ENCODE measurements at regions of chr3 and their contacts with region 1.

Region 1: GRCh38 chr3:184135149-184135910 is at the start of gene EIF2B5:
- DNase-seq: peak; percentile 75 to 89 (median 85)
- H3K4me3 ChIP-seq: peak within 1 kb of the TSS; percentile 93
- H3K4me3 Mint-ChIP-seq: peak within 1 kb of the TSS; percentile 93 to 99 (median 98)
- H3K27ac ChIP-seq: peak within 1 kb of the TSS; percentile 85
- H3K27ac Mint-ChIP-seq: peak within 1 kb of the TSS; percentile 91 to 98 (median 96)
- H3K4me1 ChIP-seq: peaks cover 22% of the 10 kb centered on the region
- H3K4me1 Mint-ChIP-seq: peaks cover 38 to 46% (median 38%) of the 10 kb centered on the region in 3 donors
- H3K27me3 ChIP-seq: no peaks in the 10 kb centered on the region
- H3K27me3 Mint-ChIP-seq: no peaks in the 10 kb centered on the region
- total RNA-seq, gene EIF2B5: 74.8 to 83.9 TPM

Region 2: DNA sequence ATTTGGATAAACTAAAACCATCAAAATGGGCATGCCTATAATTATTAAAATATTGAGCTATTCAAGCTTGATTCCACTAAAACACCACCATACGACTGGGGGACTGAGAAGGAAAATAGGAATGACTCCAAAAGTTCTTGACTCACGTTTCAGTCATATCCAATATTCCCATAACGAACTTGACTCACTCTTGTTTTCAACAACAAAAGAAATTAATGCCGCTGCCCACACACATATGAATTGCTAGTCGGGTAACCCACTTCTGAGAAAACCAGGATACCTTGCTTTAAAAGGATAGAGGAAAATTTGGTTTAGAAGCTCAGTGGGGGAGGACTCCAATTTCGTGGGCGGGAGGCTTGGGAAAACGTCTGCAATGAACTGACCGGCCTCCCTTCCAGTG is 77.3 kb before region 1 on chr3:
- CTCF ChIA-PET with region 1: no interaction called
- POLR2A ChIA-PET with region 1: no interaction called
- DNase-seq: no peak
- H3K4me3 ChIP-seq: no peak overlapping the region
- H3K4me3 Mint-ChIP-seq: no peak overlapping the region
- H3K27ac ChIP-seq: no peak overlapping the region
- H3K27ac Mint-ChIP-seq: no peak overlapping the region
- H3K4me1 ChIP-seq: no peaks in the 10 kb centered on the region
- H3K4me1 Mint-ChIP-seq: no peaks in the 10 kb centered on the region
- H3K27me3 ChIP-seq: no peaks in the 10 kb centered on the region
- H3K27me3 Mint-ChIP-seq: peaks cover 2 to 17% of the 10 kb centered on the region in 2 donors

Region 3: DNA sequence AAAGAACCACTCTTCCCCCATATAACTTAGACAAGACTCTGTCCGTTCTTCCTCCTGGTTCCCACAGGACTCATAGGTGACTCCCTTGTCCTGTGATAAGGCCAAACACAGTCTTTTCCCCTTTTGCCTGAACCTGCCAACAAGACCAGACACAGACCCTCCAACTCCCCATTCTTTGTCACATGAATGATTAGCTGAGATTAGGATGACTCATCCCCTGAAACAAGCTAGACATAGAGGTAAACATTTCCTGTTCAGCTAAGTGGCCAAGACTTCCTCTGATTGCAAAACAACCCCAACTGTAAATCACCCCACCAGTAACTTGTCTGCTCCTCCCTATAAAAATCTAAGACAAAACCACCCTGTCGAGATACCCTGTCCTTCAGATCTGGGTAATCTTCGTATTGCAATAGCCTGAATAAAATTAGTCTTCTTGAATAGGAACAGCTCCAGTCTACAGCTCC is 49.9 kb before region 1 on chr3:
- CTCF ChIA-PET with region 1: no interaction called
- POLR2A ChIA-PET with region 1: no interaction called
- DNase-seq: no peak
- H3K4me3 ChIP-seq: no peak overlapping the region
- H3K4me3 Mint-ChIP-seq: no peak overlapping the region
- H3K27ac ChIP-seq: no peak overlapping the region
- H3K27ac Mint-ChIP-seq: peak overlapping the region in 2 of 8 donors; percentile 5 to 74
- H3K4me1 ChIP-seq: no peaks in the 10 kb centered on the region
- H3K4me1 Mint-ChIP-seq: peaks cover 6 to 8% (median 7%) of the 10 kb centered on the region in 3 donors
- H3K27me3 ChIP-seq: no peaks in the 10 kb centered on the region
- H3K27me3 Mint-ChIP-seq: no peaks in the 10 kb centered on the region

Region 4: GRCh38 chr3:184154885-184155643 is 19.7 kb after region 1 on chr3 and contains the start of gene DVL3:
- CTCF ChIA-PET with region 1: interaction called, 7 read pairs
- POLR2A ChIA-PET with region 1: interaction called, 13 read pairs
- DNase-seq: peak; percentile 38 to 61 (median 40)
- H3K4me3 ChIP-seq: peak within 1 kb of the TSS; percentile 84
- H3K4me3 Mint-ChIP-seq: peak within 1 kb of the TSS; percentile 94 to 99 (median 95)
- H3K27ac ChIP-seq: peak within 1 kb of the TSS; percentile 70
- H3K27ac Mint-ChIP-seq: peak within 1 kb of the TSS; percentile 61 to 100 (median 90)
- H3K4me1 ChIP-seq: peaks cover 17% of the 10 kb centered on the region
- H3K4me1 Mint-ChIP-seq: peaks cover 23 to 39% (median 28%) of the 10 kb centered on the region in 3 donors
- H3K27me3 ChIP-seq: no peaks in the 10 kb centered on the region
- H3K27me3 Mint-ChIP-seq: no peaks in the 10 kb centered on the region
- total RNA-seq, gene DVL3: 38.5 to 44.0 TPM

Region 5: GRCh38 chr3:185070491-185071286 is 935.4 kb after region 1 on chr3:
- CTCF ChIA-PET with region 1: no interaction called
- POLR2A ChIA-PET with region 1: no interaction called
- DNase-seq: no peak
- H3K4me3 ChIP-seq: no peak overlapping the region
- H3K4me3 Mint-ChIP-seq: no peak overlapping the region
- H3K27ac ChIP-seq: no peak overlapping the region
- H3K27ac Mint-ChIP-seq: no peak overlapping the region
- H3K4me1 ChIP-seq: no peaks in the 10 kb centered on the region
- H3K4me1 Mint-ChIP-seq: no peaks in the 10 kb centered on the region
- H3K27me3 ChIP-seq: no peaks in the 10 kb centered on the region
- H3K27me3 Mint-ChIP-seq: peaks cover 3 to 9% of the 10 kb centered on the region in 2 donors

Measured in CD8-positive, alpha-beta memory T cell (primary cell).